ENCODE measurements at regions of chr12 and their contacts with region 1.

Region 1: DNA sequence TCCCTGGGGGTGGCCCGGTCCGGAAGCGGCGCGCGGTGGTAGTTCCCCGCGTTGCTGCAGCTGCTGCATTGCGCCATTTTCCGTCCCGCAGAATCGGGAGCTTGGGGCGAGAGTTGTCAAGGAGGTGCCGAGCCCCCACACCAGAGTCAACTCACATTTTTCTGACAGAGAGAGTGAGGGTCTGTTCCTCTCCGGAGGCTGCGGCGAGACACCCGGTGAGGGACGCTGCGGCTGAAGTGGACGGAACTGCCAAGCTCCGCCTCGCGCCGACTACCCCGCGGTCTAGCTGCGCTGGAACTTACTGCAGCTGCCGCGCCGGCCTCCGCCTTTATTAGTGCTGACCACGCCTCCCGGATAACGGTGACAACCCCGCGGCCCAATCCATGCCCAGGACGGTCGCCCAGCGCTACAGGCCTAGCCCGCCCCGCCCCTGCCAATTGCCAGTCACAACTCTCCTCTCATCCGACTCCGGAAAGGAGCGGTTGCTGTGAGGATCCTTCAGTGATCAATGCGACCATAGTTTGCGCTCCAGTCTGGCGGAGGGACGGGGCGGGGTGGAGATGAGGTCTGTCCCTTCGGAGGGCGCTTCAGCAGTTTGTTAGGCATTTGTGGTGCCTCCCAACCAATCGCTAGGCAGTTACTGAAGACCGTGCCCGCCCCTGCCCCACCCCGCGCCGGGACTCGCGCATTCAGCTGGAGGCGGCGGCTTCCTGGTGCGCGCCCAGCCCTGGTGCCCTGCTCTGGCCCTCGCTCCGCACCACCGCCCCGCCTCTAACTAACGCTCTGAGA is at the start of gene VAMP1:
- DNase-seq: peak; percentile 99
- ATAC-seq: peak; percentile 91
- H3K4me3 Mint-ChIP-seq: peak within 1 kb of the TSS; percentile 91
- H3K27ac Mint-ChIP-seq: peak within 1 kb of the TSS; percentile 82
- H3K4me1 Mint-ChIP-seq: peaks cover 52% of the 10 kb centered on the region
- H3K27me3 Mint-ChIP-seq: no peaks in the 10 kb centered on the region
- total RNA-seq, gene VAMP1: 34.5 to 52.3 TPM

Region 2: GRCh38 chr12:6430124-6430989 is 40.2 kb before region 1 on chr12:
- CTCF ChIA-PET with region 1: interaction called, 200 read pairs
- POLR2A ChIA-PET with region 1: interaction called, 10 read pairs
- intact Hi-C with region 1: loop called in 1 of 2 experiments (anchors 1 kb)
- DNase-seq: peak; percentile 84
- ATAC-seq: no peak
- H3K4me3 Mint-ChIP-seq: peak overlapping the region; percentile 1
- H3K27ac Mint-ChIP-seq: peak overlapping the region; percentile 80
- H3K4me1 Mint-ChIP-seq: peaks cover 80% of the 10 kb centered on the region
- H3K27me3 Mint-ChIP-seq: no peaks in the 10 kb centered on the region

Region 3: GRCh38 chr12:6443361-6443983 is 27.1 kb before region 1 on chr12:
- CTCF ChIA-PET with region 1: interaction called, 130 read pairs
- POLR2A ChIA-PET with region 1: interaction called, 8 read pairs
- intact Hi-C with region 1: no loop called
- DNase-seq: peak; percentile 76
- ATAC-seq: peak; percentile 65
- H3K4me3 Mint-ChIP-seq: peak overlapping the region; percentile 86
- H3K27ac Mint-ChIP-seq: peak overlapping the region; percentile 94
- H3K4me1 Mint-ChIP-seq: peaks cover 71% of the 10 kb centered on the region
- H3K27me3 Mint-ChIP-seq: no peaks in the 10 kb centered on the region

Region 4: DNA sequence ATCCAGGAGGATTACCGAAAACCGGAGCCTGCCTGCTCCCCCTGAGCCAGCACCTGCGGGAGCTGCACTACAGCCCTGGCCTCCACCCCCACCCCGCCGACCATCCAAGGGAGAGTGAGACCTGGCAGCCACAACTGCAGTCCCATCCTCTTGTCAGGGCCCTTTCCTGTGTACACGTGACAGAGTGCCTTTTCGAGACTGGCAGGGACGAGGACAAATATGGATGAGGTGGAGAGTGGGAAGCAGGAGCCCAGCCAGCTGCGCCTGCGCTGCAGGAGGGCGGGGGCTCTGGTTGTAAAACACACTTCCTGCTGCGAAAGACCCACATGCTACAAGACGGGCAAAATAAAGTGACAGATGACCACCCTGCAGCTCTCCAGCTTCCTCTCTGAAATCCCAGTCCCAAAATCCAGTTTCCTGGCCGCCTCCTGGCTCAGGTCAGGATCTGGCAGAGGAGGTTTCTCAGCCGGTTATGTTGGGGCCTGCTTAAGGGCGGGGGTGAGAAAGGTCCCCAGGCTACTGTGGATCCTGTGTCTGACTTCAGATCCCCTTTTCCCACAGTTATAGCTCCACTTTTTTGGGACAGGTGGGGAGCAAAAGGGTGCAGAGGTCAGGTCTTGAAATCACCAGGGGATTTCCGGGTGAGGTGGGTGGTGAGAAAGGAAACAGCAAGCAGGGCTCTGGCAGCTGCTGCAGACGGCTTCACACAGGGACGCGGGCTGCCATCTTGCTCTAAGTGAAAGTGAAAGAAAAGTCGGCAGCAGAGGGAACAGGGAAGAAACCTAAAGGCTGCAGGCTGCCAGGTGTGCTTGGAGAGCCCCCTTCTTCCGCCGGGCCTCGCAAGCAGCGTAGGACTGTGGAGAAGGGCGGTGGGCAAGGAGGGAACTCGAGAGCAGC is 19.0 kb before region 1 on chr12 and contains the start of gene TAPBPL:
- CTCF ChIA-PET with region 1: interaction called, 130 read pairs
- POLR2A ChIA-PET with region 1: interaction called, 10 read pairs
- intact Hi-C with region 1: no loop called
- DNase-seq: peak; percentile 91
- ATAC-seq: peak; percentile 84
- H3K4me3 Mint-ChIP-seq: peak within 1 kb of the TSS; percentile 100
- H3K27ac Mint-ChIP-seq: peak within 1 kb of the TSS; percentile 99
- H3K4me1 Mint-ChIP-seq: peaks cover 67% of the 10 kb centered on the region
- H3K27me3 Mint-ChIP-seq: no peaks in the 10 kb centered on the region
- total RNA-seq, gene TAPBPL: 27.4 to 40.8 TPM

Region 5: DNA sequence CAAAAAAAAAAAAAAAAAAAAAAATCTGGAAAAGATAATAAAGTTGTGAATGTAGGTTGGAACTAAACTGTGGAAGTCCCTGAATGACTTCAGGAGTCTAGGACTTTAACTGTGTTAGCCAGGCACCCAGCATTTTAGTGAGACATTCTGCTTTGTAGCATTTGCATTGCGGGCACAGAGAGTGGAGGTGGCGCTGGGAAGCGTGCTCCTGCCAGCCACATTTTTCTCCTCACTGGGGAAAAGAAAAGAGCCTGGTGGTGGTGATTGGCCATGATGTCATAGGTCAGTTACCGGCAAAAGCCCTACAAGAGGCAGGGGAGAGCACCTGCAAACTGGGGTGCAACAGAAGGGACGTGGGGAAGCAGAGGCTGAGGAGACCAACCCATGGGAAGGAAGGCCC is 54.1 kb after region 1 on chr12:
- CTCF ChIA-PET with region 1: no interaction called
- POLR2A ChIA-PET with region 1: no interaction called
- intact Hi-C with region 1: no loop called
- DNase-seq: no peak
- ATAC-seq: no peak
- H3K4me3 Mint-ChIP-seq: no peak overlapping the region
- H3K27ac Mint-ChIP-seq: peak overlapping the region; percentile 12
- H3K4me1 Mint-ChIP-seq: no peaks in the 10 kb centered on the region
- H3K27me3 Mint-ChIP-seq: no peaks in the 10 kb centered on the region

Region 6: GRCh38 chr12:6540181-6540877 is 69.8 kb after region 1 on chr12:
- CTCF ChIA-PET with region 1: interaction called, 15 read pairs
- POLR2A ChIA-PET with region 1: interaction called, 45 read pairs
- intact Hi-C with region 1: no loop called
- DNase-seq: peak; percentile 72
- ATAC-seq: peak; percentile 24
- H3K4me3 Mint-ChIP-seq: peak overlapping the region; percentile 45
- H3K27ac Mint-ChIP-seq: peak overlapping the region; percentile 73
- H3K4me1 Mint-ChIP-seq: peaks cover 53% of the 10 kb centered on the region
- H3K27me3 Mint-ChIP-seq: no peaks in the 10 kb centered on the region

Region 7: GRCh38 chr12:6554168-6555017 is 83.8 kb after region 1 on chr12:
- CTCF ChIA-PET with region 1: interaction called, 5 read pairs
- POLR2A ChIA-PET with region 1: no interaction called
- intact Hi-C with region 1: loop called in 1 of 2 experiments (anchors 1 kb)
- DNase-seq: peak; percentile 88
- ATAC-seq: peak; percentile 68
- H3K4me3 Mint-ChIP-seq: peak overlapping the region; percentile 91
- H3K27ac Mint-ChIP-seq: peak overlapping the region; percentile 76
- H3K4me1 Mint-ChIP-seq: peaks cover 54% of the 10 kb centered on the region
- H3K27me3 Mint-ChIP-seq: no peaks in the 10 kb centered on the region